GM10248 (cell line): ENCODE measurements at regions of chr7 and their contacts with region 1.

Region 1: GRCh38 chr7:139359366-139360209 is at the start of gene LUC7L2:
- DNase-seq: peak; percentile 95
- CTCF ChIP-seq: no peak

Region 2: GRCh38 chr7:139340037-139340807 is 19.4 kb before region 1 on chr7:
- CTCF ChIA-PET with region 1: interaction called, 14 read pairs
- POLR2A ChIA-PET with region 1: interaction called, 8 read pairs
- DNase-seq: peak; percentile 93
- CTCF ChIP-seq: peak; percentile 68

Region 3: DNA sequence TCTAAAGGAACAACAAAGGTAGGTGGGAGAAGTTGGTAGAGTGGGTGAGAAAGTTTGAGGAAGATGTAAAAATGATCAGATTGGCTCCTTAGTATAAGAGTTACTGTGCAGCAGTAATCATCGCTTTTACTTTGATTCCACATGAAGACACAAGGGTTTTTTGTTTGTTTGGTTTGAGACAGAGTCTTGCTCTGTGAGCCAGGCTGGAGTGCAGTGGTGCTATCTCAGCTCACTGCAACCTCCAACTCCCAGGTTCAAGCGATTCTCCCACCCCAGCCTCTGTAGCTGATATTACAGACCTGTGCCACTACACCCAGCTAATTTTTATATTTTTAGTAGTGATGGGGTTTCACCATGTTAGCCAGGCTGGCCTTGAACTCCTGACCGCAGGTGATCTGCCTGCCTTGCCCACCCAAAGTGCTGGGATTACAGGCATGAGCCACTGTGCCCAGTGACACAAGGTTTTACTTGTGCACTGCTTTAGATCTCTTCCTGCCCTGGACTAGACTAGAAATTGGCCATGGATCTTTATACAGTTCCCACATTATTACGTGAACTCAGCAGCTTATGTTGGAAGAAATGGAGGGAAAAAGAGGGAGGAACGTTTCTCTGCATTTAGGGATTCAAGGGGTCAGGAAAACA is 10.8 kb after region 1 on chr7:
- CTCF ChIA-PET with region 1: interaction called, 5 read pairs
- POLR2A ChIA-PET with region 1: interaction called, 14 read pairs
- DNase-seq: no peak
- CTCF ChIP-seq: no peak

Region 4: GRCh38 chr7:139393621-139394211 is 34.1 kb after region 1 on chr7:
- CTCF ChIA-PET with region 1: no interaction called
- POLR2A ChIA-PET with region 1: no interaction called
- DNase-seq: no peak
- CTCF ChIP-seq: no peak